ENCODE measurements at regions of chr2 and their contacts with region 1.

Region 1: DNA sequence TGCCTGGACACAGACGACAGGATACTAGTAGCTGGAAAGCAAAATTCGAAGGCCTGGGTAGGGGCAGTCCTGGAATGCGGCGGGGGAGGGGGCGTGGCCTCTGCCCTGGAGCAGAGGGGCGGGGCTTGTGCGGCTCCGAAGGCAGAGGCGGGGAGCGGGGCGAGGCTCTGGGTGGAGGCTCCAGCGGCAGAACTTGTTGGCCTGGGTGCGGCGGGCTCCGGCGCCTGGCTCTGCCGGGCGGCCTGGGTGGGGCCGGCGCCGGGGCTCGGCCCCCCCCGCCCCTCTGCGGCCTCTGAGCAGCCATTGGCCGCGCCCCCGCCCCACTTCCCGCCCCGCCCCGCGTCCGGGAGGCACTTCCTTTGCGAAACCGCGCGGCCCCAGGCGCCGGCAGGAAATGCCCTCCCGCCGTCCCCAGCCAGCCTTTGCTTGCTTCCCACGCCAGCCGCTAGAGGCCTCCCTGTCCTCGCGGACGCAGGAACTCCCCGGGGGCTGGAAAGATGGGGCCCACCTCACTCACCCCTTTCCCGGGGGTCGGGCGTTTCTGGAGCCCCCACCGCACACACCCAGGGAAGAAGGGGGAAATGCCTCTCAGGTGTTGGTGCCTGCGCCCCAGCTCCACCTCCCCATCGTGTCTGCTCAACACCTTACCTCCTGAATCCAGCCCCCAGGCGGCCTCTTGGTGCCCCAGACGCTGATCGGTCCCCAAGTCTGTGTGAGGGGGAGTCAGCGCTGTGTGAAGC is 6.7 kb downstream of the CTDSP1 start:
- DNase-seq: peak; percentile 89
- ATAC-seq: peak; percentile 83
- H3K4me3 Mint-ChIP-seq: peak overlapping the region; percentile 85
- H3K27ac Mint-ChIP-seq: peak overlapping the region; percentile 86
- H3K4me1 Mint-ChIP-seq: peaks cover 54% of the 10 kb centered on the region
- H3K27me3 Mint-ChIP-seq: no peaks in the 10 kb centered on the region
- CTCF ChIP-seq: no peak

Region 2: DNA sequence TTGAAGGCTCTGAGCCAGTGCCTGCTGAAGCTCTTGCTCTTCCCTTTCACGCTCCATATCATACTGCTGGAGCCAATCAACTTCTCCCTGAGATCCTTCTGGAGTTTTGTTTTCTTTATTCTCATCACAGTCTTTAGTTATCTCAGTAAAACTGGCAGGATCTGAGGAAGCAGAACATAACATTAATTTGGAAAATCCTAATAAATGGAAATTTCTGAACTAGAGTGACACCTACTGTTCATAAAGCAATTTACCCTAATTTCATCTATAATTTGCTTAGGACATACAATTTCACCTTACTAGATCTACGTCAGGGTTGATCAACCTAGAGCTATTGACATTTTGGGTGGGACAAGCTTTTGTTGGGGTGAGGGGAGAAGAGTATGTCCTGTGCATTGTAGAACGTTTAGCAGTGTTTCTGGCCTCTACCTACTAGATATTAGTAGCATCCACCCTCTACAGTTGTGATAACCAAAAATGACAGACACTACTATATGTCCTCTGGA is 59.7 kb after region 1 on chr2:
- CTCF ChIA-PET with region 1: interaction called, 8 read pairs
- POLR2A ChIA-PET with region 1: no interaction called
- intact Hi-C with region 1: loop called (anchors 1 kb)
- DNase-seq: no peak
- ATAC-seq: no peak
- H3K4me3 Mint-ChIP-seq: no peak overlapping the region
- H3K27ac Mint-ChIP-seq: peak overlapping the region; percentile 8
- H3K4me1 Mint-ChIP-seq: peaks cover 17% of the 10 kb centered on the region
- H3K27me3 Mint-ChIP-seq: no peaks in the 10 kb centered on the region
- CTCF ChIP-seq: no peak

Region 3: GRCh38 chr2:218516614-218517013 is 110.2 kb after region 1 on chr2:
- CTCF ChIA-PET with region 1: no interaction called
- POLR2A ChIA-PET with region 1: no interaction called
- intact Hi-C with region 1: loop called (anchors 1 kb)
- DNase-seq: no peak
- ATAC-seq: no peak
- H3K4me3 Mint-ChIP-seq: no peak overlapping the region
- H3K27ac Mint-ChIP-seq: no peak overlapping the region
- H3K4me1 Mint-ChIP-seq: peaks cover 4% of the 10 kb centered on the region
- H3K27me3 Mint-ChIP-seq: no peaks in the 10 kb centered on the region
- CTCF ChIP-seq: no peak

Region 4: DNA sequence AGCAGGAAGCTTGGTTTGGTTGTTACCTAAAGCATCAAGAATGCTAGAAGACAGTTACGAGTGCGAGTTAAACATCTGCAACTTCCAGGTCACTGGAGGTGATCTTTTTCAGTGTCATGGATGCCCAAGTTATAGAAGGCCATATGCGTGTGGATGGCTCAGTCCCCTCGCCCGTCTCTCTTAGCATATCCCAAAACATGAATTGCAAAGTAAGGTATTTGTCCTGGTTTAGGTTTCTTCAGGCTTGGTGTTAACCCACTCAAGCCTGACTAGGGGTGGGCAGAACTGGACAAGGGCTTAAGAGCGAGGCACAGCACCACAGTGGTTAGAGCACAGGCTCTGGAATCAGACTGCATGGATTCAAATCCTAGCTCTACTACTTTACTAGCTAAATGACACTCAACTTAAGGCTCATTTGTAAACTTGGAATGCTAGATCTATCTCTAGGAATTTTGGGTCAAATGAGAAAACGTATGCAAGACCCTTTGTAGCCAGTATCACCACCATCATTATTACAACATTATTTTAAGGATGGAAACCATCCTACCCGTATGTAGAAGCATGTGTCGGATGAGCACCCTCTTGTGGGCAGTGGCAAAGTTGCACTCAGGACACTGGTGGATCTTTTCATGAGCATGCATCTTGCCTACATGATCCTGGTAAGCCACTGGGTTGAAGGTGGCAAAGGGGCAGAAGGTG is 241.9 kb after region 1 on chr2:
- CTCF ChIA-PET with region 1: interaction called, 11 read pairs
- POLR2A ChIA-PET with region 1: no interaction called
- intact Hi-C with region 1: loop called (anchors 1 kb)
- DNase-seq: peak; percentile 36
- ATAC-seq: peak; percentile 88
- H3K4me3 Mint-ChIP-seq: no peak overlapping the region
- H3K27ac Mint-ChIP-seq: no peak overlapping the region
- H3K4me1 Mint-ChIP-seq: no peaks in the 10 kb centered on the region
- H3K27me3 Mint-ChIP-seq: no peaks in the 10 kb centered on the region
- CTCF ChIP-seq: no peak

Region 5: GRCh38 chr2:218659258-218659987 is 253.0 kb after region 1 on chr2 and contains the starts of genes BCS1L and ZNF142:
- CTCF ChIA-PET with region 1: interaction called, 3 read pairs
- POLR2A ChIA-PET with region 1: interaction called, 3 read pairs
- intact Hi-C with region 1: loop called (anchors 1 kb)
- DNase-seq: peak; percentile 85
- ATAC-seq: peak; percentile 96
- H3K4me3 Mint-ChIP-seq: peak within 1 kb of the TSS; percentile 99
- H3K27ac Mint-ChIP-seq: peak within 1 kb of the TSS; percentile 93
- H3K4me1 Mint-ChIP-seq: peaks cover 31% of the 10 kb centered on the region
- H3K27me3 Mint-ChIP-seq: no peaks in the 10 kb centered on the region
- CTCF ChIP-seq: no peak
- total RNA-seq, gene BCS1L: 66.9 and 75.1 TPM in 2 replicates
- total RNA-seq, gene ZNF142: 44.9 and 63.6 TPM in 2 replicates

Region 6: GRCh38 chr2:218691234-218691633 is 284.9 kb after region 1 on chr2:
- CTCF ChIA-PET with region 1: interaction called, 4 read pairs
- POLR2A ChIA-PET with region 1: no interaction called
- intact Hi-C with region 1: loop called (anchors 1 kb)
- DNase-seq: no peak
- ATAC-seq: no peak
- H3K4me3 Mint-ChIP-seq: no peak overlapping the region
- H3K27ac Mint-ChIP-seq: no peak overlapping the region
- H3K4me1 Mint-ChIP-seq: no peaks in the 10 kb centered on the region
- H3K27me3 Mint-ChIP-seq: no peaks in the 10 kb centered on the region
- CTCF ChIP-seq: no peak

Region 7: DNA sequence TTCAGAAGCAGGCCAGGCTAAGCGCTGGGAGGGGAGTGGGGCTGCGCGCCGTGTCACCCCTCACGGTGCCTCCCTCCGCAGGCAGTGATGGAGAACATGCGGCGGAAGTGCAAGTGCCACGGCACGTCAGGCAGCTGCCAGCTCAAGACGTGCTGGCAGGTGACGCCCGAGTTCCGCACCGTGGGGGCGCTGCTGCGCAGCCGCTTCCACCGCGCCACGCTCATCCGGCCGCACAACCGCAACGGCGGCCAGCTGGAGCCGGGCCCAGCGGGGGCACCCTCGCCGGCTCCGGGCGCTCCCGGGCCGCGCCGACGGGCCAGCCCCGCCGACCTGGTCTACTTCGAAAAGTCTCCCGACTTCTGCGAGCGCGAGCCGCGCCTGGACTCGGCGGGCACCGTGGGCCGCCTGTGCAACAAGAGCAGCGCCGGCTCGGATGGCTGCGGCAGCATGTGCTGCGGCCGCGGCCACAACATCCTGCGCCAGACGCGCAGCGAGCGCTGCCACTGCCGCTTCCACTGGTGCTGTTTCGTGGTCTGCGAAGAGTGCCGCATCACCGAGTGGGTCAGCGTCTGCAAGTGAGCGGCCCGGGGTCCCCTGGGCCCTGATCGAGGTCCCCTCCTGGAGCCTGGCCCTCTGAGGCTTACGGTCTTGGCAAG is 486.4 kb after region 1 on chr2:
- CTCF ChIA-PET with region 1: no interaction called
- POLR2A ChIA-PET with region 1: interaction called, 4 read pairs
- intact Hi-C with region 1: loop called (anchors 5 kb)
- DNase-seq: peak; percentile 91
- ATAC-seq: peak; percentile 66
- H3K4me3 Mint-ChIP-seq: peak overlapping the region; percentile 80
- H3K27ac Mint-ChIP-seq: peak overlapping the region; percentile 92
- H3K4me1 Mint-ChIP-seq: peaks cover 59% of the 10 kb centered on the region
- H3K27me3 Mint-ChIP-seq: no peaks in the 10 kb centered on the region
- CTCF ChIP-seq: no peak